CD8-positive, alpha-beta T cell (primary cell): ENCODE measurements at regions of chr10 and their contacts with region 1.

Region 1: GRCh38 chr10:22436884-22437619 is 91.8 kb downstream of the SPAG6 start:
- DNase-seq: peak; percentile 84 to 96 (median 90)
- ATAC-seq: peak; percentile 86
- H3K4me3 ChIP-seq: peak overlapping the region; percentile 88 to 93
- H3K4me3 Mint-ChIP-seq: peak overlapping the region; percentile 96
- H3K27ac ChIP-seq: peak overlapping the region; percentile 93 to 94
- H3K27ac Mint-ChIP-seq: peak overlapping the region; percentile 98
- H3K4me1 ChIP-seq: peaks cover 20% of the 10 kb centered on the region
- H3K4me1 Mint-ChIP-seq: peaks cover 29% of the 10 kb centered on the region
- H3K27me3 ChIP-seq: no peaks in the 10 kb centered on the region
- H3K27me3 Mint-ChIP-seq: no peaks in the 10 kb centered on the region
- CTCF ChIP-seq: no peak

Region 2: GRCh38 chr10:21495752-21496342 is 941.2 kb before region 1 on chr10:
- CTCF ChIA-PET with region 1: interaction called, 4 read pairs
- POLR2A ChIA-PET with region 1: no interaction called
- intact Hi-C with region 1: loop called in 1 of 2 experiments (anchors 1 kb)
- DNase-seq: peak; percentile 77 to 94 (median 85)
- ATAC-seq: peak; percentile 85
- H3K4me3 ChIP-seq: peak overlapping the region; percentile 73 to 79
- H3K4me3 Mint-ChIP-seq: peak overlapping the region; percentile 81
- H3K27ac ChIP-seq: no peak overlapping the region
- H3K27ac Mint-ChIP-seq: no peak overlapping the region
- H3K4me1 ChIP-seq: peaks cover 35% of the 10 kb centered on the region
- H3K4me1 Mint-ChIP-seq: peaks cover 19% of the 10 kb centered on the region
- H3K27me3 ChIP-seq: peaks cover 53 to 58% of the 10 kb centered on the region in 2 experiments
- H3K27me3 Mint-ChIP-seq: peaks cover 60% of the 10 kb centered on the region
- CTCF ChIP-seq: peak; percentile 98

Region 3: DNA sequence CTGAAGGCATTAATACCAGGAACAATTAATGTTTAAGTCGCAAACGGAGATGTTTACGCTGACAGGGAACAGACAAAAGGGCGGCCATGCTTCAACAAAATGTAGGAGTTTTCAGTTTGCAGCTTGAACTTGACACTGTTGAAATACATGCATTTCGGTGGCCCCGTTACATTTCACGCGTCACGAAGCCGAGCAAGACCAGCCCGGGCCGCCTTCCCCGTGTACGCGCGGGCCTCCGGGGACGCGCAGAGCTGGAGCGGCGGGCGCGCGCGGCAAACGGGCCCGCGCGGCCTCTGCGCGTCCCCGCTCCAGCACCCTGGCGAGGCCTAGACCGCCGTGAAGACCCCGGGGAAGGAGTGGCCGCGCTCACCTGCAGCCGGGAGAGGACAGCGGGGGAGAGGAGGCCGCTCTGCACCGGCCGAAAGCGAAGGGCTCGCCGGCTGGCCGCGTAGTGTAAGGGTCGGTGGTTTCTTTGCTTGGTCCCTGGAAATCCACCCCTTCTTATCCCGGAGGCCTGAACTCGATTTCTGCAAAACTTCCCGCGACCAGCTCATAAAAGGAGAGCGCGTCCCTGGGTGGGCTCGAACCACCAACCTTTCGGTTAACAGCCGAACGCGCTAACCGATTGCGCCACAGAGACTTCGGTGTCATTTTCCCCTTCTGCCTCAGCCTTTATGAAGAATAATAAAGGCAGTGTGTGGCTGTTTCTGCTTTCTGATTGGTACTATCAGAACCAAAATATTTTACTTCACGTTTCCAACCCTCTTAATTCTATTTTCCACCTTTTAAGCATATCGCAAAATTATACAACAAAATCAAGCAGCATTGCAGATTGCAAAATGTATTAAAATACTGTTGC is 207.9 kb before region 1 on chr10:
- CTCF ChIA-PET with region 1: interaction called, 8 read pairs
- POLR2A ChIA-PET with region 1: interaction called, 35 read pairs
- intact Hi-C with region 1: loop called (anchors 1 kb)
- DNase-seq: peak; percentile 66 to 92 (median 86)
- ATAC-seq: peak; percentile 76
- H3K4me3 ChIP-seq: peak overlapping the region; percentile 67 to 77
- H3K4me3 Mint-ChIP-seq: peak overlapping the region; percentile 82
- H3K27ac ChIP-seq: peak overlapping the region; percentile 60 to 63
- H3K27ac Mint-ChIP-seq: peak overlapping the region; percentile 98
- H3K4me1 ChIP-seq: peaks cover 8% of the 10 kb centered on the region
- H3K4me1 Mint-ChIP-seq: peaks cover 14% of the 10 kb centered on the region
- H3K27me3 ChIP-seq: peaks cover 0 to 3% of the 10 kb centered on the region in 2 experiments
- H3K27me3 Mint-ChIP-seq: no peaks in the 10 kb centered on the region
- CTCF ChIP-seq: no peak

Region 4: GRCh38 chr10:22340362-22341189 is 96.5 kb before region 1 on chr10:
- CTCF ChIA-PET with region 1: no interaction called
- POLR2A ChIA-PET with region 1: interaction called, 14 read pairs
- intact Hi-C with region 1: loop called in 1 of 2 experiments (anchors 5 kb)
- DNase-seq: peak in 6 of 9 experiments; percentile 50 to 75 (median 64)
- ATAC-seq: peak; percentile 39
- H3K4me3 ChIP-seq: peak overlapping the region; percentile 50 to 70
- H3K4me3 Mint-ChIP-seq: peak overlapping the region; percentile 87
- H3K27ac ChIP-seq: peak overlapping the region; percentile 25 to 40
- H3K27ac Mint-ChIP-seq: peak overlapping the region; percentile 84
- H3K4me1 ChIP-seq: peaks cover 18% of the 10 kb centered on the region
- H3K4me1 Mint-ChIP-seq: peaks cover 14% of the 10 kb centered on the region
- H3K27me3 ChIP-seq: peaks cover 74 to 87% of the 10 kb centered on the region in 2 experiments
- H3K27me3 Mint-ChIP-seq: peaks cover 67% of the 10 kb centered on the region
- CTCF ChIP-seq: no peak

Region 5: GRCh38 chr10:22365233-22365632 is 71.8 kb before region 1 on chr10:
- CTCF ChIA-PET with region 1: no interaction called
- POLR2A ChIA-PET with region 1: no interaction called
- intact Hi-C with region 1: no loop called
- DNase-seq: no peak
- ATAC-seq: no peak
- H3K4me3 ChIP-seq: no peak overlapping the region
- H3K4me3 Mint-ChIP-seq: no peak overlapping the region
- H3K27ac ChIP-seq: no peak overlapping the region
- H3K27ac Mint-ChIP-seq: no peak overlapping the region
- H3K4me1 ChIP-seq: peaks cover 2% of the 10 kb centered on the region
- H3K4me1 Mint-ChIP-seq: peaks cover 6% of the 10 kb centered on the region
- H3K27me3 ChIP-seq: no peaks in the 10 kb centered on the region
- H3K27me3 Mint-ChIP-seq: peaks cover 6% of the 10 kb centered on the region
- CTCF ChIP-seq: no peak

Region 6: GRCh38 chr10:22386503-22386902 is 50.5 kb before region 1 on chr10:
- CTCF ChIA-PET with region 1: no interaction called
- POLR2A ChIA-PET with region 1: no interaction called
- intact Hi-C with region 1: no loop called
- DNase-seq: no peak
- ATAC-seq: no peak
- H3K4me3 ChIP-seq: no peak overlapping the region
- H3K4me3 Mint-ChIP-seq: no peak overlapping the region
- H3K27ac ChIP-seq: no peak overlapping the region
- H3K27ac Mint-ChIP-seq: no peak overlapping the region
- H3K4me1 ChIP-seq: no peaks in the 10 kb centered on the region
- H3K4me1 Mint-ChIP-seq: no peaks in the 10 kb centered on the region
- H3K27me3 ChIP-seq: no peaks in the 10 kb centered on the region
- H3K27me3 Mint-ChIP-seq: peaks cover 7% of the 10 kb centered on the region
- CTCF ChIP-seq: no peak

Region 7: DNA sequence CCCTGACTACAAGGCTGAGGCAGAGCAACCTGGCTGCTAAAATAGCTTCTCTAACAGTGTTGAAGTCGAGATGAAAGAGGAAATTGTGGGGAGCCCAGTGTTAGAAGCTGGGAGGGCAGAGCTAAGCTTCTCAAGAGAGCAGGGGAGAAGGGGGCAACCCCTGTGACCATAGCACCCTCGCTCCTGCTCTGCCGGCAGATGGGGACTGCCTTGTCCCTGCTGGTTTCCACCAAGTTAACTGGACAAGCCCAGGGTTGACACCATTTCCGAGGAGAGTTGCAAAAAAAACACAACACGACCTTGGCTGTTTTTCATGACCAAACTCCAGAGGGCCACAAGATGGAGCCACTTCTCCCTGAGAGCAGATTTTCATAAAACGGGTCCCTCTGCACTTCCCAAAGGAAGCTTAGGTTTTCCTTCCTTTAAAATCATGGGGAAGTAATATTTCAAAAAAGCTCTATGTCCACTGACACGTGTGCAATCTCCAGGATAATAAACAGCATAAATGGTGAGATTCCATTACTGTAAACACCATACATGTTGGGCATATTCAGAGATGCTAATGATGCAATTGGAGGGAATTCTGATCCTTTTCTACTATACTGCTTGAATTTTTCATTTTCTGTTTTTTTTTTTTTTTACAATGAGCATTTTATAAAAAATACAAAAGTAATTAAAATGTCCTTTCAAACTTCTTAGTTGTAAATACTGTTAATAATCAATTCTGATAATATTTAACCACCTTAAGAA is 136.9 kb after region 1 on chr10:
- CTCF ChIA-PET with region 1: interaction called, 3 read pairs
- POLR2A ChIA-PET with region 1: no interaction called
- intact Hi-C with region 1: loop called in 1 of 2 experiments (anchors 5 kb)
- DNase-seq: peak in 7 of 9 experiments; percentile 2 to 82 (median 43)
- ATAC-seq: peak; percentile 64
- H3K4me3 ChIP-seq: no peak overlapping the region
- H3K4me3 Mint-ChIP-seq: peak overlapping the region; percentile 71
- H3K27ac ChIP-seq: peak overlapping the region in 1 of 2 experiments; percentile 63
- H3K27ac Mint-ChIP-seq: peak overlapping the region; percentile 94
- H3K4me1 ChIP-seq: peaks cover 35% of the 10 kb centered on the region
- H3K4me1 Mint-ChIP-seq: peaks cover 73% of the 10 kb centered on the region
- H3K27me3 ChIP-seq: no peaks in the 10 kb centered on the region
- H3K27me3 Mint-ChIP-seq: no peaks in the 10 kb centered on the region
- CTCF ChIP-seq: peak; percentile 79

Region 8: DNA sequence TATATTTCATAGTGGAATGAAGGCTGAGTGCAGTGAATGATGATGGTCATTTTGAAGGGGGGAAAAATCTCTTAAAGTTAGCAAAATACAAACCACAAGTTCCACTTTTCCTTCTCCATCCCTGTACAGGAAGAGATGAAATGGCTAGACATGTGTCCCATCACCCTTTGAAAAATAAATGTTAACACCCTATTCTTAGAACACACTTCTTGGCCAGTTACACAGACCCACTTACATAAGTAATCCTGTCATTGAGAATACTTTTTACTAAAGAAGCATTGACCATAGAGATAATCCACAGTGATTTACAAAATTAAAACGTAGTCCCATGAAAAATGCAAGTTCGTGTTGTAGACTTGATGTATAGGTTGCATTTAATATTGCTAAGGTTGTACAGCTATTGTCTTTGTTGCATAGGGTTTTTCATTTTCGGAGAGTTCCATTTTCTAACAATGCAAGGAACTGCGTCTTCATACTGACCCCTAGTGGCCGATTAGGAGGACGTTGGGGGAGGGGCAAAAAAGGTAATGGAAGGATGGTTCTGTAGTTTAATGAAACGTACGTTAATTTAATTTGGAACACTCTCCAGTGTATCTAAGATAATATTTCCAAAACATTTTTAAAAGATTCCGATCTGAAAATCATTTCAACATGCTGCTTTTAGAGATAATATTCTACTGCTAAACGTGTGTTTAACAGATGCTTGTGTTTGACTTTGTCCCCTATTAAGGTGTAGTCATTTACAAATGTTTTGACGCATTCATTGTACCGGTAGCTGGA is 551.7 kb after region 1 on chr10:
- CTCF ChIA-PET with region 1: no interaction called
- POLR2A ChIA-PET with region 1: interaction called, 3 read pairs
- intact Hi-C with region 1: loop called (anchors 5 kb)
- DNase-seq: peak; percentile 46 to 85 (median 74)
- ATAC-seq: peak; percentile 80
- H3K4me3 ChIP-seq: no peak overlapping the region
- H3K4me3 Mint-ChIP-seq: no peak overlapping the region
- H3K27ac ChIP-seq: no peak overlapping the region
- H3K27ac Mint-ChIP-seq: no peak overlapping the region
- H3K4me1 ChIP-seq: peaks cover 4% of the 10 kb centered on the region
- H3K4me1 Mint-ChIP-seq: peaks cover 14% of the 10 kb centered on the region
- H3K27me3 ChIP-seq: no peaks in the 10 kb centered on the region
- H3K27me3 Mint-ChIP-seq: peaks cover 2% of the 10 kb centered on the region
- CTCF ChIP-seq: peak; percentile 88